ENCODE measurements at regions of chr4 and their contacts with region 1.

Region 1: DNA sequence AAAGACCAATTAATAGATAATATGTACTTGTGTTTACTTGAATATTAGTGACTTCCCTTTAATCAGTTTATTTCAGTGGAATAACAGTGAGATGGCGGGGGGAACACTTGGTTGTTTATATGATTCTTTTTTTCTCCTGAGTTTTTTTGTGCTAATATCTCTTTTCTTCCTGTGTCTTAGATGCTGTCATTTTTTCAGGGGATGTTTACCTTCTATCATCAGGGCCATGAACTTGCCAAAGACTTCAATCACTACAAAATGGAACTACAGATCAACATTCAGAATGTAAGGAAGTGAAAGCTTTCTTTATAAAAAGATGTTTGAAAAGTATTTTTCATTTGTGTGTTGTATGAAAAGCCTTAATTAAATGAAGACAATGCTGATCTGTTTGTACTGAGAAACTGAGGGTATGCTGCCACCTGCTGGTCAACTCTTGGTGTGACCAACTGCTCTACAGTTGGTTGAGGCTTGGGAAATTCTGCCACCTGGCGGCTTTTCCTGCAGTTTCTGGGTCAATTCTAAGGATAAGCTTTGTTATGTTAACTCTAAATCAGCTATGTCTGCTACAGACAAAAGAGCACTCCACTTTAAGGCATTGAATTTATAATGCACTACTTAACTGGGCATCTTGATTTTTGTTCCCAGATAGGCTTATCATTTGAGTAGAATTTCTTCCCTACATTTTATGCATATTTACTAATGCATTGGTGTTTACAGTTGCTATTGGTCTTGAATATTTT is 134.8 kb downstream of the ARHGAP10 start:
- DNase-seq: peak; percentile 85
- H3K4me3 ChIP-seq: no peak overlapping the region
- H3K27ac ChIP-seq: no peak overlapping the region
- H3K27me3 ChIP-seq: no peaks in the 10 kb centered on the region
- CTCF ChIP-seq: peak; percentile 99

Region 2: GRCh38 chr4:147590249-147590920 is 276.3 kb before region 1 on chr4:
- CTCF ChIA-PET with region 1: interaction called, 117 read pairs
- POLR2A ChIA-PET with region 1: no interaction called
- DNase-seq: peak; percentile 59
- H3K4me3 ChIP-seq: no peak overlapping the region
- H3K27ac ChIP-seq: no peak overlapping the region
- H3K27me3 ChIP-seq: no peaks in the 10 kb centered on the region
- CTCF ChIP-seq: peak; percentile 85

Region 3: GRCh38 chr4:147638942-147639341 is 227.8 kb before region 1 on chr4:
- CTCF ChIA-PET with region 1: interaction called, 83 read pairs
- POLR2A ChIA-PET with region 1: no interaction called
- DNase-seq: no peak
- H3K4me3 ChIP-seq: no peak overlapping the region
- H3K27ac ChIP-seq: no peak overlapping the region
- H3K27me3 ChIP-seq: no peaks in the 10 kb centered on the region
- CTCF ChIP-seq: no peak

Region 4: DNA sequence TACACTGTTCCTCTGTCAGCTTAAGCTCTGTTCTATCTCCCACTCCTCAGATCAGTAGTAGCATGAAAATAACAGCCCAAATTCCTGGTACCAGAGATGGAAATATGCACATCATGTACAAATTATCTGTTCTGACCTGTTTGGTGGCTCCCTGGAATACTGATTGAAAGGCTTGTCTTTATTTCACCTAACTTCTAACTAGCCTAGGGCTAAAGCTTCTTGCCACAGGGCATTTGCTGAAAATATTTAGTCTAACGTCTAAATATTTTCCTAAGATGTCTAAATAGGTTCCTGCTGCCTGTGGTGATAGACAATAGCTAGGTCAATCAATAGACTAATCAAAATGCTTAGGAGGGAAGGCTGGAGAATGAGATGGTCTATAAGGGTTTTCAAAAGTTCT is 169.8 kb before region 1 on chr4:
- CTCF ChIA-PET with region 1: interaction called, 25 read pairs
- POLR2A ChIA-PET with region 1: no interaction called
- DNase-seq: no peak
- H3K4me3 ChIP-seq: no peak overlapping the region
- H3K27ac ChIP-seq: no peak overlapping the region
- H3K27me3 ChIP-seq: peaks cover 5% of the 10 kb centered on the region
- CTCF ChIP-seq: no peak

Region 5: DNA sequence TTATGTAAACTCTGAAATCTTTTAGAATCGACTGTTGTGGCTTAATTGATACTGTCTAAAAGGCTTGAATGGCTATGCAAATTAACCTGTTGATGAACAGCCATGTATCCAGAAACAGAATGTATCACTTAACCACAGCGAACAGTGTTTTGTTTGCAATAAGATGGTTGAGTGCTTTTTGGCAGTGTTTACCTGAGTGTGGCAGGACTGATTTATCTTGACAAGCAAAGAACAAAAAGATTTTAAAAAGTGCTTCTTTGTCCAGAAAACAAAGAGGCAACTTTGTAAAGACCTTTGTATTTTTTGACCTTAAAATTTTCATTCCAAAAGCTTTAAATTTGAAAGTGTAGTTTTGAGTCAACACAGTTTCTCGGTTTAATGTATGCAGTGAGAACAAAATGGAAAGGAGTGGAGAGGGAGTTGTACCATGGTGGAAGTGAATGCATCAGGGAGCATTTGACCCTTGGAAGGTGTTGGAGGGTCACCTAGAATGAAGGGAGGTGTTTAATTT is 116.8 kb before region 1 on chr4:
- CTCF ChIA-PET with region 1: interaction called, 21 read pairs
- POLR2A ChIA-PET with region 1: no interaction called
- DNase-seq: no peak
- H3K4me3 ChIP-seq: no peak overlapping the region
- H3K27ac ChIP-seq: no peak overlapping the region
- H3K27me3 ChIP-seq: no peaks in the 10 kb centered on the region
- CTCF ChIP-seq: no peak

Region 6: GRCh38 chr4:147843162-147843561 is 23.5 kb before region 1 on chr4:
- CTCF ChIA-PET with region 1: interaction called, 106 read pairs
- POLR2A ChIA-PET with region 1: interaction called, 3 read pairs
- DNase-seq: no peak
- H3K4me3 ChIP-seq: no peak overlapping the region
- H3K27ac ChIP-seq: no peak overlapping the region
- H3K27me3 ChIP-seq: no peaks in the 10 kb centered on the region
- CTCF ChIP-seq: peak; percentile 16; the same call in 1 of the 2 replicates

Region 7: GRCh38 chr4:147916351-147916750 is 49.6 kb after region 1 on chr4:
- CTCF ChIA-PET with region 1: interaction called, 12 read pairs
- POLR2A ChIA-PET with region 1: no interaction called
- DNase-seq: no peak
- H3K4me3 ChIP-seq: no peak overlapping the region
- H3K27ac ChIP-seq: no peak overlapping the region
- H3K27me3 ChIP-seq: no peaks in the 10 kb centered on the region
- CTCF ChIP-seq: no peak

Measured in AG04450 (cell line).